RWPE1 (cell line): ENCODE measurements at regions of chr6 and their contacts with region 1.

Region 1: DNA sequence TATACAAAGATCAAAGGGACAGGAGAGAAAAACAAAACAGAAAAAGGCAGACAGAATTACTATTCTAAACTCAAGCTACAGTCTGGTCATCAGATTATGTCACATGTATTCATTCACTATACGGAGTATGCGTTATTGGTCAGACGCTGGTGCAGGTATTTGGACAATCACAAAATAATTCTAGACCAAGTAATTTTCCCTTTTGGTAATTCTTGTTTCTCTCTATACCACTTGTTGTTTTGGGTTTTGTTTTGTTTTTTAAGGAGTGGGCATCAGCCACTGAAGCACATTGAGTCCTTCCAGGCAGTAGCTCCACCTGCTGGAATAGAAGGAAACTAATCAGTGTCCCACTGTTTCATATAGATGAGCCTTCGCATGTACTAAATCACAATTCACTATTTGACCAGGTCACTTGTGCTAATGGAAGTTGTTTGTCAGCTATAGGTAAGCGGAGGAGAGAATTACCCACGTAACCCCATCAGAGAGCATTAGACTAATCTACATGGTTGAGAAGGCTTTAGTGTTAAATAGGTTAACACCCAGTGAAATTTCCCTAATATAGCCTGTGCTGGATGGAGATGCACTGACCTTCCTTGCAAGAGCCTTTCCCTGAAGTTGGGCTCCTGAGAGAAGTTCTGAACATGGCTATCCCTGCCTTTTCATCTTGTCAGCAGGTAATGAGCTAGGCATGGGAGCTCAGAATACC is 77.9 kb downstream of the TNFAIP3 start:
- DNase-seq: peak; percentile 54
- H3K27ac ChIP-seq: no peak overlapping the region
- CTCF ChIP-seq: peak; percentile 78

Region 2: DNA sequence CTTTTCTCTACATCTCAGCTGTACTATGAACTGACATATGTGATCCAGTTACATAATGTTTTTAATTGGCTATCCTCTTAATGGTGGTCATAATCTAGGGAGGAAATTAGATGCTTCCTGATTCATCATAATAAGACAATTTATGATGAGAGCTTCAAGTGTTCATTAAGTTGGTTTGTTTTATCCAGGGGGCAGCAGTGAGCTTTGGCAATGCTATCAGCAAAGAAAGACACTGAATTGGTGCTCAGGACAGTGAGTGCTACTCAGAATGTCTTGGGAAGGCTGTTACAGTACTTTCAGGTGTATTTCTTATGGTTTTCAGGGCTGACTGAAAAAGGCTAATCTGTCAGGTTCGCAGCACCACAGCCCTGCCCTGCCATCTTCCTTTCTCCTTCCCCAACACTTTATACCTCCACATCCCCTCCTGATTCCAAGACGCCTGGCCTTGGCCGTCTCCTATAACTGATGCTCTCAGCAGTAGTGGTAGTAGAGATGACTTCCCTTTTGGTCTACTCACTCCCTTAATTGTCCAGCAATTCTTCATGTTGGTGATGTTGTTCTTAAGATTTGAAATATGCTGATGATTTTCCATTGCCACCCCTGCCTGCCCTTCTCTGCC is 144.9 kb before region 1 on chr6:
- CTCF ChIA-PET with region 1: interaction called, 10 read pairs
- POLR2A ChIA-PET with region 1: no interaction called
- DNase-seq: peak; percentile 44
- H3K27ac ChIP-seq: no peak overlapping the region
- CTCF ChIP-seq: peak; percentile 27; the same call in 1 of the 2 replicates

Region 3: GRCh38 chr6:137866914-137867684 is 77.8 kb before region 1 on chr6 and contains the start of gene TNFAIP3:
- CTCF ChIA-PET with region 1: interaction called, 15 read pairs
- POLR2A ChIA-PET with region 1: no interaction called
- DNase-seq: peak; percentile 96
- H3K27ac ChIP-seq: peak within 1 kb of the TSS; percentile 80
- CTCF ChIP-seq: peak; percentile 92

Region 4: GRCh38 chr6:138211027-138211581 is 266.2 kb after region 1 on chr6:
- CTCF ChIA-PET with region 1: no interaction called
- POLR2A ChIA-PET with region 1: no interaction called
- DNase-seq: no peak
- H3K27ac ChIP-seq: no peak overlapping the region
- CTCF ChIP-seq: no peak